ENCODE measurements at regions of chr2 and their contacts with region 1.

Region 1: GRCh38 chr2:84314901-84315330 is 144.2 kb downstream of the SUCLG1 start:
- DNase-seq: peak; percentile 31
- H3K4me3 ChIP-seq: no peak overlapping the region
- CTCF ChIP-seq: peak; percentile 93

Region 2: DNA sequence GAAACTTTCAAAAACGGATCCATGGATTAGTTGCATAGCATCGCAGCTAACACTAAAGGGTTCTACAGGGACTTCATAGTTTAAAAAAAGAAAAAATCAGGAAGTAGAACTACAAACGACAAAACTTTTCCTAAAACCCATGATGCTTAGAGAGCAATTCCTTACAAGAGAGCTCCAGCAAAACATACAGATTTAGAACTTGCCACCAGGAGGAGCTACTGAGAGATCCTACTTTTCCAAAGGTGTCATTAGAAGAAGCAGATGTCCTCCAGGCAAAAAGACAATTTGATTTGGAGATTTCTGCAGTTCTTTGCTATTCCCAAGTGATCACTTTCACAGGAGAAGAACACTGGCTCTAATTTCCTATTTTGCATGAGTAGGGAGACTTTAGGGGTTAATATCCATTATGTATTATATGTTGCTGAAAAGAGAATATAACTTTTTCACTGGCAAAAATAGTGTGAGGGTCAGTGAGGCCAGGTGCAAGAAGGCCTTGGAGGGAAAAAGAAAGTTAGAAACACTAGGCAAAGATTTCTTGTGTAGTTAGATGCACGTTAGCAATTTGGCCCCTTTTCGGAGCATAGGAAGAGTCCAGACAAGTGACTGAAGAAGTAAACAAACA is 292.0 kb before region 1 on chr2:
- CTCF ChIA-PET with region 1: interaction called, 20 read pairs
- POLR2A ChIA-PET with region 1: no interaction called
- DNase-seq: peak; percentile 12
- H3K4me3 ChIP-seq: no peak overlapping the region
- CTCF ChIP-seq: peak; percentile 64

Region 3: DNA sequence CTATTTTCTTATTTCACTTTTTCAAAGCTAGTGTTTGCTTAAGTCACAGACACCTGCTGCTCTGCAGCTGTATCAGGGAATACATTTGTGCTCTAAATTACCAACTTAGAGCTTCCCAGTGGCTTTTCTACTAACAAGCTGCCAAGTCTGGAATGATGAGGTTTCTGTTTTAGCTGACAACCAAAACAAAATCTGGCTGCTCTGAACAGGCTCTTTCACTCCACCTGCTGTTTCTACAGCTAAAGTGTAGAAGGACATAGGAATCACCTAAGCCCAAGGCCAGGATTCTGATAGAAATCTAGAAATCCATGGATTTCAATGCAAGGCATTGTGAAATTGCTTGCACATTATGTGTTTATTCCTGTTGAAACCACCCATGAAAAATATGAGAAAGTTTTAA is 57.1 kb before region 1 on chr2:
- CTCF ChIA-PET with region 1: no interaction called
- POLR2A ChIA-PET with region 1: no interaction called
- DNase-seq: no peak
- H3K4me3 ChIP-seq: no peak overlapping the region
- CTCF ChIP-seq: no peak

Region 4: GRCh38 chr2:84302513-84303412 is 12.2 kb before region 1 on chr2:
- CTCF ChIA-PET with region 1: interaction called, 39 read pairs
- POLR2A ChIA-PET with region 1: no interaction called
- DNase-seq: no peak
- H3K4me3 ChIP-seq: no peak overlapping the region
- CTCF ChIP-seq: peak; percentile 87

Region 5: DNA sequence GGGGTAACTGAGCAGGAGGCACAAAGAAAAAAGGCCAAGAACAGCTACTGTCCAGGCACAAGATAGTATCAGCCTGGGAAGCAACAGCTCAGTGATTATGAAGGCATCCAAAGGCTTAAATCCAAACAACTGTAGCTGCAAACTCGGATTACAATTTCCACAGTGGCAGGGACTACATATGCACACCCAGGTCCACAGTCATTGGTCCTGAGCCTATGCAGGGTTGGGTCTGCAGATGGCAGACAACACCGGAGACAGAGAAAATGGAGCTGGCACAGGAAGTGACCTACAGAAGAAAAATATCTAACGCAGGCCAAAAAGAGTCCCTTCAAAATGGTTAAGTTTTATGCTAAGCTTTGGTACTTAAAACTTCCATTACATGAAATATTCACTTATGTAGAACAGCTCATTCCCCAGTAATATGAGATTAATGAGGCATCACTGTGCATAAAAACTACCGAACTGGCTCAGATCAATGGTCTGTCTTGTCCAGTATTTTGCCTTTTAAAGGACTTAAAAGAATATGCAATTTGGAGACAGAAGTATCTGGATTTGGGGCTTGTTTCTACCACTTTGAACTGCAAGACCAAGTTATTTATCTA is 12.0 kb after region 1 on chr2:
- CTCF ChIA-PET with region 1: interaction called, 30 read pairs
- POLR2A ChIA-PET with region 1: no interaction called
- DNase-seq: no peak
- H3K4me3 ChIP-seq: no peak overlapping the region
- CTCF ChIP-seq: no peak

Region 6: GRCh38 chr2:84424152-84424551 is 109.2 kb after region 1 on chr2:
- CTCF ChIA-PET with region 1: interaction called, 45 read pairs
- POLR2A ChIA-PET with region 1: no interaction called
- DNase-seq: no peak
- H3K4me3 ChIP-seq: no peak overlapping the region
- CTCF ChIP-seq: peak; percentile 40

Region 7: DNA sequence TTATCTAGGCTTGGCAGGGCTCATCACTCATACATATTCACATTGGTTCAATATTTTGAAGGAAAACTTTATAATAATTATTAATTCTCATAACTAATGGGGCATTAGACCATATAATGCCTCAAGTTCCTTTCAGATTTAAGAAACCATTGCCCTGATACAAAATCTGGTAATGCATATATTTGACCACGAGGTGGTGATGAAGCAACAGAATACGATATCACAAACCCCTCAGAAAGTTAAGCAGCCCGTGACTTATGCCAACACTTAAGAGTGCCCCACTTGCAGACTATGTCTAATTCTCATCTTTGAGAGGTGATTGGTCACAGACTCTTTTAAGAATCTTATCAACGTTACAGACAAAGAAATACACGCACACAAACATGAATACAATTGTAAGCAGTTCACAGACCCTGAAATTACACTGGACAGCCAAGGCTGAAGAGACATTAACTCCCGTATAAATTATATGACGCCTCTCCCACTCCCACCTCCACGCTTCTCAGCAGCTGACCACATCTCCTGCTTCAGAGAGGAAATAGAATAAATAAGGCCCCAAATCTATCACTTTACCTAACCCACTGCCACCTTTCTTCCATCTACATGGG is 180.7 kb after region 1 on chr2:
- CTCF ChIA-PET with region 1: no interaction called
- POLR2A ChIA-PET with region 1: no interaction called
- DNase-seq: no peak
- H3K4me3 ChIP-seq: no peak overlapping the region
- CTCF ChIP-seq: peak; percentile 43

Measured in AG04449 (cell line).